ENCODE measurements at regions of chr1 and their contacts with region 1.

Region 1: DNA sequence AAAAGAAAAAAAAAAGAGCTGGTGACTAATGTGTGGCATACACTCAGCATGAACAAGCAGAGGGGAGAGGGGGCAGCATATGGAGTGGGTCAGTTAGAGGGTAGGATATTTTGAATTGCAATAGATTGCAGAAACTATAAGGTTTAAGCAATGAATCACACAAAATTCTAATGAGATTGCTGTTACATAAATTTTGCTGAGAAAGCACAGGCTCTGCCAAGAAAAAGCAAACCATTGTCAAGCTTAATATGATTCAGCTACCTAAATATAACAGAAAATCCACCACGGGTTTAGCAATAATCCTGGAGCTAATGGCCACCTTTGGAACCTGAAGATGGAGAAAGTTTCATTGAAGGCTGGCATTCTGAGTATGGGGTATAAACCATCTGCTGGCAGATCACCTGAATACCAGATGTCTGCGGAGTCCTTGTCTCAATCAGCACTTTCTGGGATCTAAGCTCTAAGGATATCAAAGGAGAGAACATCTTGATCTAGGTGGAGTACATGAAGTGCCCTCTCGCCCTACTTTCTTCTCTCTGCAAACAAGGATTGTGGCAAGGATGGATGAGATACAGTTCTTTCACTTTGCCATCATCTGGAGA is 30.3 kb upstream of the ANGPTL7 start:
- DNase-seq: peak; percentile 14 to 52
- ATAC-seq: peak; percentile 71 to 78
- H3K4me3 ChIP-seq: no peak overlapping the region
- H3K27ac ChIP-seq: peak overlapping the region; percentile 85 to 94 (median 90)
- H3K4me1 ChIP-seq: peaks cover 27 to 36% of the 10 kb centered on the region in 2 donors
- H3K27me3 ChIP-seq: no peaks in the 10 kb centered on the region
- CTCF ChIP-seq: no peak
- POLR2A ChIP-seq: no peak

Region 2: GRCh38 chr1:10679496-10680220 is 479.2 kb before region 1 on chr1:
- in situ Hi-C with region 1: no loop called
- intact Hi-C with region 1: loop called (anchors 5 kb)
- DNase-seq: no peak
- ATAC-seq: no peak
- H3K4me3 ChIP-seq: no peak overlapping the region
- H3K27ac ChIP-seq: peak overlapping the region in 3 of 4 donors; percentile 22 to 81 (median 37)
- H3K4me1 ChIP-seq: peaks cover 78 to 81% of the 10 kb centered on the region in 2 donors
- H3K27me3 ChIP-seq: no peaks in the 10 kb centered on the region
- CTCF ChIP-seq: no peak
- POLR2A ChIP-seq: no peak

Region 3: GRCh38 chr1:11174261-11174942 is 15.6 kb after region 1 on chr1:
- in situ Hi-C with region 1: no loop called
- intact Hi-C with region 1: loop called (anchors 2 kb)
- DNase-seq: no peak
- ATAC-seq: no peak
- H3K4me3 ChIP-seq: no peak overlapping the region
- H3K27ac ChIP-seq: no peak overlapping the region
- H3K4me1 ChIP-seq: peaks cover 31 to 44% of the 10 kb centered on the region in 2 donors
- H3K27me3 ChIP-seq: no peaks in the 10 kb centered on the region
- CTCF ChIP-seq: no peak
- POLR2A ChIP-seq: no peak

Region 4: DNA sequence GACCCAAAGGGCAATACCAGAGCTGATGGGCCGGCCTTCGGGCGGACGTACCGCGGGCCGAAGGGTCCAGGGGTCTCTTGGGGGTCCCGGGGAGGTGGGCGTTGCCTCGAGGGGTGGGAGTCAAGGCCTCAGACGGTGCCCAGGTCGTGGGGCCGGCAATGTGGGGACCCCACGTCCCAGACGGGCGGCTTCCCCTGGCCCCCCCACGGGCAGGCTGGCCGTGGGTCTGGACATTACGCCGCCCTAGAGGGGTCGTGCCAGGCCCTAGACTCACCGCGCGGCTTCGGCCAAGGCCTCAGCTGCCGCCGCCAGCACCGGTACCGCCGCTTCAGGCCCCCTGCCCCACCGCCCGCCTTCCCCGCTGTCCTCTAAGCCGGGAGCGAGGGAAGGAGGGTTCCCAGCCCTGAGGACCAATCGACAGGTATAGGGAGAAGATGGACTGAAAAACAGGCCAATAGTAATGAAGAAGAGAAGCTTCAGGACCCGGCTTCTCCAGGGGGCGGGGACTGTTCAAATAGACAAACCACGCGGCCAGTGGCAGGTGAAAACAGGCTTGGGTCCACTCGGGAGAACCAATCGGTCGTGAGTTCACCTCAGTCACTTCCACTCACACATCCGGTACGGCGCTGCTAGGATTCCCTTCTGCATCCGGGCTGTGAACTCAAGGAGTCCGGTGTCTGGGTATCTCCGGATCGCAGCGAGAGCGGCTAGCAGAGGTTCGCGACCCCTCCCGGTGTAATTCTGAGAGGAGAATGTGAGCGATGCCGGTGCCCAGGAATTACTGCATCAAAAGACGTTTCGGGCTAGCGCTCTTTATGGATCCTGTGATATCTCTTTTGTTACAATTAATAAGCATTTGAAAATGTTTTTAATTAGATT is 103.6 kb after region 1 on chr1 and contains the start of gene MTOR:
- in situ Hi-C with region 1: no loop called
- intact Hi-C with region 1: loop called (anchors 5 kb)
- DNase-seq: peak; percentile 99 to 100
- ATAC-seq: peak; percentile 99 to 100
- H3K4me3 ChIP-seq: peak within 1 kb of the TSS; percentile 81 to 100 (median 94)
- H3K27ac ChIP-seq: peak within 1 kb of the TSS; percentile 90 to 94 (median 94)
- H3K4me1 ChIP-seq: peaks cover 6 to 13% of the 10 kb centered on the region in 2 donors
- H3K27me3 ChIP-seq: no peaks in the 10 kb centered on the region
- CTCF ChIP-seq: peak in 3 of 5 experiments; percentile 9 to 21 (median 20)
- POLR2A ChIP-seq: peak; percentile 70 to 80
- total RNA-seq, gene MTOR: 40.7 to 66.3 (median 52.9) TPM

Measured in gastrocnemius medialis (tissue), 4 donors.